Ovary (tissue), 10 donors: ENCODE measurements at regions of chr17 and their contacts with region 1.

Region 1: GRCh38 chr17:75271233-75271954 is 363 bp upstream of the MIF4GD start:
- DNase-seq: peak; percentile 69 to 87 (median 78)
- H3K4me3 ChIP-seq: peak overlapping the region; percentile 82
- H3K27ac ChIP-seq: peak overlapping the region; percentile 22 to 71
- H3K4me1 ChIP-seq: peaks cover 2% of the 10 kb centered on the region
- H3K27me3 ChIP-seq: no peaks in the 10 kb centered on the region
- CTCF ChIP-seq: peak; percentile 57 to 97 (median 95)
- EP300 ChIP-seq: no peak
- POLR2A ChIP-seq: no peak

Region 2: GRCh38 chr17:75405365-75406221 is 134.2 kb after region 1 on chr17 and contains the start of gene GRB2:
- intact Hi-C with region 1: loop called in 1 of 4 experiments (anchors 5 kb)
- DNase-seq: peak; percentile 99
- H3K4me3 ChIP-seq: peak within 1 kb of the TSS; percentile 87
- H3K27ac ChIP-seq: peak within 1 kb of the TSS; percentile 26 to 80
- H3K4me1 ChIP-seq: peaks cover 1% of the 10 kb centered on the region
- H3K27me3 ChIP-seq: no peaks in the 10 kb centered on the region
- CTCF ChIP-seq: no peak
- EP300 ChIP-seq: no peak
- POLR2A ChIP-seq: peak; percentile 70
- total RNA-seq, gene GRB2: 49.2 to 84.9 (median 62.6) TPM